ENCODE measurements at regions of chr17 and their contacts with region 1.

Region 1: DNA sequence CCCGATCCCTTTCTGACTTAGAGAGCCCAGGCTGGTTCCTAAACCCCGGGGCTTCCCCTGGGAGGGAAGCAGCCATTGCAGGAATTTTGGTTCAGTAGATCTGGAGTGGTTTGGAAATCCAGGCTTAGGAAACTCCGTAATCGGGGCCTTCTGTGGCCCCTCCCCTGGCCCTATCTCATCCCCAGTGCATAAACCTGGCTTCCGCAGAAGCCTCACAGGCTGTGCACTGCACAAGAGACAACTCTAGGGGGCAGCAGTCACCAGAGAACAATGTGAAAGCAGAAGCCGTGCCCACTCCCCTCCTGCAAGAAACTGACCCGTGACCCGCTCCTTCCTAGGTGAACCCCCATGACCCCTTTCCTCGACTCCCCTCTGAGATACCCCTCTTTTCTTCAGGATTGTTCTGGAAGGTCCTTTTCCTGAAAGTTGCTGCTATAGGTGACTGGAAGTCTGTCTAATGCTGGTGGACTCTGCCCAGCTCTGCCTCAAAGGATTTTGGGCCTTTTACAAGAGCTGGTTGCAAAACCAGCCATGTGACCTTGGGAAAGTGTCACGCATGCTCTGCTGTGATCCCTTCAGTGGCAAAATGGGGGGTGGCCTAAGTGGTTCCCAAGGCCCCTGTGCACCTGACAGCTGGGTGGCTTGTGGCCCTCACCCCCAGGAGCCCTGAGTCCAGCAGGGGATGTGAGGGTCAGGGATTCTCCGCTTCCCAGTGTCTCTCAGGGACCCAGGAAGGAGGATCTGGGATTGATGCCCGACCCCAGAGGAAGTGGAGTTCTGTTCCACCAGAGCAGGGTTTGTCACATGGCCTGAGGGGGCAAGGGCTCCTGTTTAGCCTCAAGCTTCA is 14.4 kb downstream of the GUCY2D start:
- DNase-seq: peak; percentile 35 to 68
- H3K4me3 ChIP-seq: peak overlapping the region; percentile 50
- H3K27ac ChIP-seq: no peak overlapping the region
- H3K4me1 ChIP-seq: no peaks in the 10 kb centered on the region
- H3K27me3 ChIP-seq: no peaks in the 10 kb centered on the region
- CTCF ChIP-seq: peak; percentile 70

Region 2: DNA sequence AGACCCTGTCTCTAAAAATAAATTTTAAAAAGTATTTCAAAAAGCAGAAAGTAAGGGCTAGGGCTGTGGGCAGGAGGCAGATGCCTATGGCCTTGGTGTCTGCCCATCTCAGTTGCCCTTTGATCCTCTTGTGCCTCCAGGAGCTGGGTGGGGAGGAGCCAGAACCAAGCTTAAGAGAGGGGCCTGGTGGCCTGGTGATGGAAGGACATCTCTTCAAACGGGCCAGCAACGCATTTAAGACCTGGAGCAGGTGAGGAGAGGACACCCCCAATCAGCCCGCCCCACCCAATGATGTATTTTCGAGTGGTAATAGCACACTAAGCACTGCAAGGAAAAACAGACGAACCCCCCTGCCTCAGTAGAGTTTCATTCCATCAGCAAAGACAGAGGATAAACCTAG is 672.5 kb before region 1 on chr17:
- CTCF ChIA-PET with region 1: no interaction called
- POLR2A ChIA-PET with region 1: interaction called, 10 read pairs
- intact Hi-C with region 1: no loop called
- DNase-seq: no peak
- H3K4me3 ChIP-seq: no peak overlapping the region
- H3K27ac ChIP-seq: no peak overlapping the region
- H3K4me1 ChIP-seq: 0 out of 2 replicates have a peak, but pooled peaks cover under 1% of the 10 kb centered on the region
- H3K27me3 ChIP-seq: peaks cover 13% of the 10 kb centered on the region
- CTCF ChIP-seq: no peak

Region 3: GRCh38 chr17:7493941-7494340 is 522.9 kb before region 1 on chr17:
- CTCF ChIA-PET with region 1: interaction called, 14 read pairs
- POLR2A ChIA-PET with region 1: no interaction called
- intact Hi-C with region 1: no loop called
- DNase-seq: no peak
- H3K4me3 ChIP-seq: no peak overlapping the region
- H3K27ac ChIP-seq: no peak overlapping the region
- H3K4me1 ChIP-seq: no peaks in the 10 kb centered on the region
- H3K27me3 ChIP-seq: no peaks in the 10 kb centered on the region
- CTCF ChIP-seq: no peak